ENCODE measurements at regions of chr6 and their contacts with region 1.

Region 1: GRCh38 chr6:53492860-53493634 is 51.9 kb downstream of the GCLC start:
- DNase-seq: peak; percentile 35 to 63 (median 42)
- ATAC-seq: peak; percentile 83
- H3K4me3 ChIP-seq: no peak overlapping the region
- H3K27ac ChIP-seq: no peak overlapping the region
- H3K4me1 ChIP-seq: peaks cover 3 to 5% of the 10 kb centered on the region in 2 experiments; a peak in 2 of 5 replicates
- H3K27me3 ChIP-seq: no peaks in the 10 kb centered on the region
- CTCF ChIP-seq: peak; percentile 59 to 90 (median 60); a peak in 5 of 6 replicates
- EP300 ChIP-seq: no peak
- POLR2A ChIP-seq: no peak
- RAD21 ChIP-seq: peak; percentile 93 to 94

Region 2: GRCh38 chr6:53476964-53477363 is 16.1 kb before region 1 on chr6:
- CTCF ChIA-PET with region 1: no interaction called
- POLR2A ChIA-PET with region 1: no interaction called
- in situ Hi-C with region 1: no loop called
- intact Hi-C with region 1: no loop called
- DNase-seq: no peak
- ATAC-seq: no peak
- H3K4me3 ChIP-seq: no peak overlapping the region
- H3K27ac ChIP-seq: no peak overlapping the region
- H3K4me1 ChIP-seq: no peaks in the 10 kb centered on the region
- H3K27me3 ChIP-seq: peaks cover 7 to 15% of the 10 kb centered on the region in 2 experiments; a peak in 3 of 5 replicates
- CTCF ChIP-seq: no peak
- EP300 ChIP-seq: no peak
- POLR2A ChIP-seq: no peak
- RAD21 ChIP-seq: no peak

Region 3: DNA sequence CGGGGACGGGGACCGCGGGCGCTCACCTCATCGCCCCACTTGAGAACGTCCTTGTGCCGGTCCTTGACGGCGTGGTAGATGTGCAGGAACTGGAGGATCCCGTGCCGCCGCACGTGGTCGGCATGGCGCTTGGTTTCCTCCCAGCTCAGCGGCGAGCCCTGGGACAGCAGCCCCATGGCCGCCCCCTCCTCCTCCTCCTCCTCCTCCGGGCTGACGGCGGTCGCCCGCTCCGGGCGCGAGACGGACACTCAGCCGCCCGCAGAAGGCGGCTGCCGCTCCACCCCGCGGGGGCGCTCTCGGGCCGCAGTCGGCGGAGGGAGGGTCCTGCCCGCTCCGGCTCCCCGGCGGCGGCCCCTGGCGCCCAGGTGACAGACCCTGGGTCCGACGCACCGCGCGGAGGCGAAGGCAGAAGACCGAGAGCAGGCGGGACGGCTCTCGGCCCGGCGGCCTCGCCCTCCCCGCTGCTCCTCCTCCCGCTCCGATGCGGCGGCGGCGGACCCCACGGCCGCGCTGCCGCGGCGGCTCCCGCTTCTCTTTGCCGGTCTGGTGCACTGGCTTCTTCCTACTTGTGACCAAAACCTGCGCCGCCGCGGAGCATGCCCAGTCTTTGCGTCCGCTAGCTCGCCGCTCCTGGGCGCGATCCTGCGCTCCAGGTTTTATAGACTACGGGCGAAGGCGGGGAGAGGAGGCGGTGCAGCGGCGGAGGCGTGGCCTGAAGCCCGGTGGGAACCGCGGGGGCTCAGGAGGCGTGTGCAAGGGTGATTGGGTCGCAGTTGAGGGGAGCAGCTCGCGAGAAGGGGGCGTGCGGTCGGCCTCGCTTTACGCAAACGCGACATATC is 51.6 kb after region 1 on chr6 and contains the start of gene GCLC:
- CTCF ChIA-PET with region 1: no interaction called
- POLR2A ChIA-PET with region 1: no interaction called
- in situ Hi-C with region 1: no loop called
- intact Hi-C with region 1: loop called (anchors 1 kb)
- DNase-seq: peak; percentile 87 to 97 (median 91)
- ATAC-seq: peak; percentile 83
- H3K4me3 ChIP-seq: peak within 1 kb of the TSS; percentile 77
- H3K27ac ChIP-seq: peak within 1 kb of the TSS; percentile 88
- H3K4me1 ChIP-seq: peaks cover 23 to 40% of the 10 kb centered on the region in 2 experiments
- H3K27me3 ChIP-seq: no peaks in the 10 kb centered on the region
- CTCF ChIP-seq: peak; percentile 63 to 88 (median 75)
- EP300 ChIP-seq: 0 out of 2 replicates have a peak, but pooled peaks have one; percentile 22
- POLR2A ChIP-seq: peak; percentile 79
- RAD21 ChIP-seq: peak; percentile 87 to 89
- polyA plus RNA-seq, gene GCLC: 3.9 to 5.1 TPM

Region 4: GRCh38 chr6:53651764-53652401 is 158.8 kb after region 1 on chr6:
- CTCF ChIA-PET with region 1: interaction called, 44 read pairs
- POLR2A ChIA-PET with region 1: no interaction called
- in situ Hi-C with region 1: no loop called
- intact Hi-C with region 1: loop called (anchors 1 kb)
- DNase-seq: no peak
- ATAC-seq: peak; percentile 69
- H3K4me3 ChIP-seq: no peak overlapping the region
- H3K27ac ChIP-seq: no peak overlapping the region
- H3K4me1 ChIP-seq: peaks cover 0 to 8% of the 10 kb centered on the region in 2 experiments; a peak in 3 of 5 replicates
- H3K27me3 ChIP-seq: peaks cover 3 to 18% of the 10 kb centered on the region in 2 experiments; a peak in 3 of 5 replicates
- CTCF ChIP-seq: no peak
- EP300 ChIP-seq: no peak
- POLR2A ChIP-seq: no peak
- RAD21 ChIP-seq: no peak

Region 5: DNA sequence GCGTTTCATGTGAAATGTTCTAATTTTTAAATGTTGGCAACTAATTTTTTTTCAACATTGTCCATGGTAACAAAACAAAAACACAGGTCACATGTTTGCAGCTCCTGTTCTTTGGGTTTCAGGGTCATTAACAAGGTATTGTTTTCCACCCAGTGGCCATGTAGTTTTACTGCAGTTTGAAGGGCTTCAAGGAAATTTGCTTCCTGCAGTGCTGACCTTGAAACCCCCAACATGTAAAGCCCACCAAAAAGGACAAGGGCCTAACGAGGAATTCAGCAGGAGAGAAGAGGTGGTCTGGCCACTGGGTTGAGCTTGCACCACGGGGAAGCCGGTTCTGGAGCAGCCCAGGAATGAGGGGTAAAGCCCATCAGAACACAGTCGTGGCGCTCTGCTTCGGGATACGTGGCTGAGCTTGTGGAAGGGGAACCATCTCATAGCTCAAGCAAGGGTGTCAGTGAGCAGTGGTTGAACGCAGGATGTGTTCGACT is 186.4 kb after region 1 on chr6:
- CTCF ChIA-PET with region 1: no interaction called
- POLR2A ChIA-PET with region 1: no interaction called
- in situ Hi-C with region 1: no loop called
- intact Hi-C with region 1: loop called (anchors 1 kb)
- DNase-seq: peak; percentile 20 to 30 (median 24)
- ATAC-seq: peak; percentile 78
- H3K4me3 ChIP-seq: no peak overlapping the region
- H3K27ac ChIP-seq: no peak overlapping the region
- H3K4me1 ChIP-seq: no peaks in the 10 kb centered on the region
- H3K27me3 ChIP-seq: no peaks in the 10 kb centered on the region; a peak in 1 of 5 replicates
- CTCF ChIP-seq: peak; percentile 37 to 48 (median 43); a peak in 4 of 6 replicates
- EP300 ChIP-seq: no peak
- POLR2A ChIP-seq: no peak
- RAD21 ChIP-seq: peak; percentile 53 to 61

Region 6: DNA sequence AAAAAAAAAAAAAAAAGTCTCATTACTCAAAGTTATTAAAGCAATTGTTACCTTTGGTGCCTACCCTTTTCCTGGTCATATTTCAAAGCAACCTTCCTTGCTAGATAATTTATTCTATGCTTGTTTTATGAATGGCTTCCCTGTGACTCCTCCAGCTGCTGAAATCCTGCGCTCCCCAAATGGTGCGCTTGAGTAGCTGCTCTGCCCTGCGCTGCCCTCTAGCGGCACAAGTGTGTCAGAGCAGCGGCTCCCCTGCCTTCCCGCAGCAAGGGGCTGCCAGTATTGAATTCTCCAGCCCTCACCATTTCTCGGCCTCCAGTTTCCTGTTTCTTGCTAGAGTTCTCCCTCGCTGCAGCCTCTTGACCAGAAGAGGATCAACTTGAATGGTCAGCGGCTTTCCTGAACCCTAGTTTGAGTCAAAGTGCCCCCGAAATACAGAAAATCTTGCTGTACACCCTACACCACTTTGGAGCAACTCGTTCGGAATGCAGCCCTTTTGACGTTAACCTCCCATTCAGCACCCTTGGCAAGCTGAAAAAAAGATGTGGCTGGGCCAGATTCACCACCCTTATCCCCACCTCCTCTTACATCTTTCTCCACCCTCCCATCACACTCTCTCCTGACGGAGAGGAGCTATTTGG is 232.9 kb after region 1 on chr6:
- CTCF ChIA-PET with region 1: interaction called, 14 read pairs
- POLR2A ChIA-PET with region 1: interaction called, 3 read pairs
- in situ Hi-C with region 1: loop called (anchors 5 kb)
- intact Hi-C with region 1: loop called (anchors 1 kb)
- DNase-seq: peak; percentile 79 to 83 (median 81)
- ATAC-seq: peak; percentile 97
- H3K4me3 ChIP-seq: no peak overlapping the region
- H3K27ac ChIP-seq: no peak overlapping the region
- H3K4me1 ChIP-seq: no peaks in the 10 kb centered on the region
- H3K27me3 ChIP-seq: no peaks in the 10 kb centered on the region
- CTCF ChIP-seq: peak; percentile 87 to 95 (median 91)
- EP300 ChIP-seq: no peak
- POLR2A ChIP-seq: no peak
- RAD21 ChIP-seq: peak; percentile 75 to 76

Region 7: GRCh38 chr6:53734473-53735299 is 241.6 kb after region 1 on chr6:
- CTCF ChIA-PET with region 1: interaction called, 6 read pairs
- POLR2A ChIA-PET with region 1: no interaction called
- in situ Hi-C with region 1: loop called (anchors 5 kb)
- intact Hi-C with region 1: no loop called
- DNase-seq: peak in 2 of 4 experiments; percentile 20 to 33
- ATAC-seq: peak; percentile 87
- H3K4me3 ChIP-seq: no peak overlapping the region
- H3K27ac ChIP-seq: no peak overlapping the region
- H3K4me1 ChIP-seq: no peaks in the 10 kb centered on the region
- H3K27me3 ChIP-seq: no peaks in the 10 kb centered on the region
- CTCF ChIP-seq: peak; percentile 40 to 64 (median 50); a peak in 5 of 6 replicates
- EP300 ChIP-seq: no peak
- POLR2A ChIP-seq: no peak
- RAD21 ChIP-seq: peak; percentile 19 to 38; a peak in 1 of 4 replicates